CD4-positive, alpha-beta memory T cell (primary cell): ENCODE measurements at regions of chr19 and their contacts with region 1.

Region 1: DNA sequence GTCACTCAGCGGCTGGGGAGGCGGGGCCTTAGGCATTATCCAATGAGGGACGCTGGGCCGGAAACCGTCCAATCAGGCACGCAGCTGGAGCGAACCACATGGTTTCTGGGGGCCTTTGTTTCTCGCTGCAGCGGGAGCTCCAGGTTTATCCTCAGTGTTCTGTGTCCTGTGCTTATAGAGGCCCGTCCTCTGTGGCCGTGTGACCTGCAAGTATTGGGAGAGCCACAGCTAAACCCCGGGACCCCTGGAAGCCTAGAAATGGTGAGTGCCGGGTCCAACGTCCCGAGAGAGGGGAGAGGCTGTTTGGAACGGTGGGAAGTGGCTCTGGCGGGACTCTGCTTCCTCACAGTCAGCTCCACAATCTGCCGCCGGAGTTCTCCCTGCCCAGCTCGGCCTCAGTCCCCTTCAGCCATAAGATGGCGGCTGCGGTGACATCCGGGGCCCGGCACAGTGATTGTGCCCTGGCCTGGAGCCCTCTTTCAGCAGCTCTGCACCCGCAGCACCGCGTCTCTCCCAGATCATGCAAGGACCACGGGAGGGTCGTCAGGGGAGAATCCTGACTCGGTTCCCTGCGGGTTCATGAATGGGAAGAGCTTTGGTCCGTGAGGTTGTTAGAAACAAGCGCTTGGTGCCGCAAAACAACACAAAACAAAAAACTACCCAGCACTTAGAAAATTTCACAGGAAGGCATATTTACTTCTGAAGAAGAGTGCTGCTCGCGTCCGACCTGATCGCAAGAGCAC is at the start of gene ZNF253:
- DNase-seq: peak; percentile 91 to 97 (median 91)
- H3K4me3 ChIP-seq: peak within 1 kb of the TSS; percentile 92
- H3K4me3 Mint-ChIP-seq: peak within 1 kb of the TSS; percentile 99 to 100 (median 100)
- H3K27ac ChIP-seq: peak within 1 kb of the TSS; percentile 75
- H3K27ac Mint-ChIP-seq: peak within 1 kb of the TSS; percentile 98 to 99 (median 98)
- H3K4me1 ChIP-seq: peaks cover 30% of the 10 kb centered on the region
- H3K4me1 Mint-ChIP-seq: peaks cover 18 to 50% (median 29%) of the 10 kb centered on the region in 4 donors
- H3K27me3 ChIP-seq: no peaks in the 10 kb centered on the region
- H3K27me3 Mint-ChIP-seq: no peaks in the 10 kb centered on the region
- total RNA-seq, gene ZNF253: 23.8 to 25.8 TPM

Region 2: GRCh38 chr19:19732579-19733501 is 133.1 kb before region 1 on chr19 and contains the start of gene ZNF14:
- CTCF ChIA-PET with region 1: interaction called, 6 read pairs
- POLR2A ChIA-PET with region 1: interaction called, 18 read pairs
- intact Hi-C with region 1: loop called (anchors 1 kb)
- DNase-seq: peak; percentile 87 to 94 (median 88)
- H3K4me3 ChIP-seq: peak within 1 kb of the TSS; percentile 59 to 81
- H3K4me3 Mint-ChIP-seq: peak within 1 kb of the TSS; percentile 95 to 100 (median 98)
- H3K27ac ChIP-seq: peak within 1 kb of the TSS; percentile 72
- H3K27ac Mint-ChIP-seq: peak within 1 kb of the TSS; percentile 93 to 99 (median 98)
- H3K4me1 ChIP-seq: peaks cover 18% of the 10 kb centered on the region
- H3K4me1 Mint-ChIP-seq: peaks cover 11 to 40% (median 24%) of the 10 kb centered on the region in 4 donors
- H3K27me3 ChIP-seq: no peaks in the 10 kb centered on the region
- H3K27me3 Mint-ChIP-seq: no peaks in the 10 kb centered on the region
- total RNA-seq, gene ZNF14: 31.2 to 32.2 TPM

Region 3: DNA sequence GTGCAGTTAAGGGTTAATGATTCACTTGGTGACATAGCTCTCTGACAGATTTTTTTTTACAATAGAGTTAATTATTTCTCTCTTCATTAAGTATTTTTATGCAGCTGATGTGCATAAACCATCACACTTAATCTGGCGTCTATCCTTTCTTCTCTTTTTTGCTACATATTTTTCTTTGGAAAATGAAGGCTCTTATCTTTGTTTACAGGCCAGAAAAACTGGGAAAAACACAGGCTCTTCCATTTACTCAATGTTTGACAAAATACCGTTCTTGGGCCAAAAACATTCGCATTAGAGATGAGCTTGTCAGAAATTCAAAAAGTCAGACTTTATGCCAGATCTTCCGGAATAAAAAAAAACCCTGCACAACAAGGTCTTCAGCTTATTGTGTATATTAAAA is 11.8 kb after region 1 on chr19:
- CTCF ChIA-PET with region 1: interaction called, 3 read pairs
- POLR2A ChIA-PET with region 1: interaction called, 10 read pairs
- intact Hi-C with region 1: no loop called
- DNase-seq: no peak
- H3K4me3 ChIP-seq: no peak overlapping the region
- H3K4me3 Mint-ChIP-seq: no peak overlapping the region
- H3K27ac ChIP-seq: no peak overlapping the region
- H3K27ac Mint-ChIP-seq: no peak overlapping the region
- H3K4me1 ChIP-seq: no peaks in the 10 kb centered on the region
- H3K4me1 Mint-ChIP-seq: peaks cover 4 to 16% (median 12%) of the 10 kb centered on the region in 4 donors
- H3K27me3 ChIP-seq: no peaks in the 10 kb centered on the region
- H3K27me3 Mint-ChIP-seq: no peaks in the 10 kb centered on the region

Region 4: DNA sequence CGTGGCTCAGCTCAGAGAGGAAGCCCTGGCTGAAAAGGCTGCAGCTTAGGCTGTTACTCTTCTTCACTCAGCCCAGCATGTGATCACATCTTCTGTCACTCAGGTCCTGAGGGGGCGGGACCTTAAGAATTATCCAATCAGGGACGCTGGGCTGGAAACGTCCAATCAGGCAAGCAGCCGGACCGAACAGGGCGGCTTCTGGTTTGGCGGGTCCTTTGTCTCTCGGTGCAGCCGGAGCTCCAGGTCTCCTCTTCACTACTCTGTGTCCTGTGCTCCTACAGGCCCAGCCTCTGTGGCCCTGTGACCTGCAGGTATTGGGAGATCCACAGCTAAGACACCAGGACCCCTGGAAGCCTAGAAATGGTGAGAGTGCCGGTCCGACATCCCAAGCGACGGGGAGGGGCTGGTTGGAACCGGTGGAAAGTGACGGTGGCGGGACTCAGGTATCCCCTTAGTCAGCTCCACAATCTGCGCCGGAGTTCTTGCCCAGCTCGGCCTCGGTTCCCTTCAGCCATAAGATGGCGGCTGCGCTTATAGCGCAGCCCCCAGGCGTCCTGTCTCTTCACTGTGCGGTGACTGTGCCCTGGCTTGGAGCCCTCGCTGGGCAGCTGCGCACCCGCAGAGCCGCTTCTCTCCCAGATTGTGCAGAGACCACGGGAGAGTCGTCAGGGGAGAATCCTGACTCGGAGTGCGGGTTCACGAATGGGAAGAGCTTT is 35.0 kb after region 1 on chr19 and contains the start of gene ZNF93:
- CTCF ChIA-PET with region 1: interaction called, 9 read pairs
- POLR2A ChIA-PET with region 1: interaction called, 71 read pairs
- intact Hi-C with region 1: loop called (anchors 1 kb)
- DNase-seq: peak; percentile 90 to 96 (median 92)
- H3K4me3 ChIP-seq: peak within 1 kb of the TSS; percentile 79 to 82
- H3K4me3 Mint-ChIP-seq: peak within 1 kb of the TSS; percentile 96 to 99 (median 98)
- H3K27ac ChIP-seq: peak within 1 kb of the TSS; percentile 66
- H3K27ac Mint-ChIP-seq: peak within 1 kb of the TSS; percentile 80 to 97 (median 93)
- H3K4me1 ChIP-seq: peaks cover 15% of the 10 kb centered on the region
- H3K4me1 Mint-ChIP-seq: peaks cover 12 to 34% (median 24%) of the 10 kb centered on the region in 4 donors
- H3K27me3 ChIP-seq: no peaks in the 10 kb centered on the region
- H3K27me3 Mint-ChIP-seq: no peaks in the 10 kb centered on the region
- total RNA-seq, gene ZNF93: 8.8 to 9.2 TPM

Region 5: DNA sequence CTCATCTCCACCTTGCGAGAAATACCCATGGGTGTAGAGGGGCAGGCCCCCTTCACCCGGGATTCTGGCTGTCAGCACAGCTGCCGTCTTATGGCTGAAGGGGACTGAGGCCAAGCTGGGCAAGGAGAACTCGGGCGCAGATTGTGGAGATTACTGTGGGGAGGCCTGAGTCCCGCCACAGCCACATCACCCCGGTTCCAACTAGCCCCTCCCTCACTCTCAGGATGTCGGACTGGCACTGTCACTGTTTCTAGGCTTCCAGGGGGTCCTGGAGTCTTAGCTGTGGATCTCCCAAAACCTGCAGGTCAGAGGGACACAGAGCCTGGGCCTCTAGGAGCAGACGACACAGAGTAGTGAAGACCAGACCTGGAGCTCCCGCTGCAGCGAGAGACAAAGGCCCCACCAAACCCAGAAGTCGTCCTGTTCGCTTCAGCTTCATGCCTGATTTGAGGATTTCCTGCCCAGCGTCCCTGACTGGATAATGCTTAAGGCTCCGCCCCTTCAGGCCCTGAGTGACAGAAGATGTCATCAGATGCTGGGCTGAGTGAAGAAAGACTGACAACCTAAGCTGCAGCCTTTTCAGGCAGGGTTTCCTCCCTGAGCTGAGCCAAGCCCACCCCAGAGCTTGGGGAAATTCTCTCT is 90.6 kb after region 1 on chr19:
- CTCF ChIA-PET with region 1: interaction called, 4 read pairs
- POLR2A ChIA-PET with region 1: no interaction called
- intact Hi-C with region 1: loop called (anchors 1 kb)
- DNase-seq: no peak
- H3K4me3 ChIP-seq: no peak overlapping the region
- H3K4me3 Mint-ChIP-seq: no peak overlapping the region
- H3K27ac ChIP-seq: no peak overlapping the region
- H3K27ac Mint-ChIP-seq: no peak overlapping the region
- H3K4me1 ChIP-seq: no peaks in the 10 kb centered on the region
- H3K4me1 Mint-ChIP-seq: peaks cover 0 to 7% (median 3%) of the 10 kb centered on the region in 4 donors
- H3K27me3 ChIP-seq: no peaks in the 10 kb centered on the region
- H3K27me3 Mint-ChIP-seq: no peaks in the 10 kb centered on the region